ENCODE measurements at regions of chr11 and their contacts with region 1.

Region 1: DNA sequence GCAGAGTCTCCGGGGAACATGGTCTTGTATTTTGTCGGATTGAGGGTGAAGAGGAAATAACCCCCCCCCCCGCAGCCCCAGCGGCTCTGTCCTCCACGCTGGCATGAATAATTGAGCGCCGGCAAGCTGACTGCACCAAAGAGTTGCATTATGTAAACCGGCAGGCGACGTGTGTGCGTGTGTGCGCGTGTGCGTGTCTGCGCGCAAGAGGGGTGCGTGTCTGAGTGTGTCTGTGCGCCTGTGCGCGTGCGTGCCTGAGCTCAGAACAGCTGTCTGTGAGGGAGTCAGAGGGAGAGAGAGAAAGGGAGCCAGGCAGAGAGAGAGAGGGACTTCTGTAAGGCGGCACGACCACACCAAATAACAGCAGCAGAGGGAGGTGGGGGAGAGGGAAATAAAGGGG is 94.4 kb downstream of the SCN3B start:
- DNase-seq: peak; percentile 24
- H3K4me3 Mint-ChIP-seq: peak overlapping the region; percentile 65
- H3K27ac Mint-ChIP-seq: peak overlapping the region; percentile 57
- H3K4me1 Mint-ChIP-seq: peaks cover 28% of the 10 kb centered on the region
- H3K27me3 Mint-ChIP-seq: no peaks in the 10 kb centered on the region

Region 2: GRCh38 chr11:123511037-123511870 is 48.8 kb before region 1 on chr11:
- intact Hi-C with region 1: loop called (anchors 1 kb)
- DNase-seq: peak; percentile 56
- H3K4me3 Mint-ChIP-seq: no peak overlapping the region
- H3K27ac Mint-ChIP-seq: peak overlapping the region; percentile 73
- H3K4me1 Mint-ChIP-seq: peaks cover 57% of the 10 kb centered on the region
- H3K27me3 Mint-ChIP-seq: no peaks in the 10 kb centered on the region

Region 3: DNA sequence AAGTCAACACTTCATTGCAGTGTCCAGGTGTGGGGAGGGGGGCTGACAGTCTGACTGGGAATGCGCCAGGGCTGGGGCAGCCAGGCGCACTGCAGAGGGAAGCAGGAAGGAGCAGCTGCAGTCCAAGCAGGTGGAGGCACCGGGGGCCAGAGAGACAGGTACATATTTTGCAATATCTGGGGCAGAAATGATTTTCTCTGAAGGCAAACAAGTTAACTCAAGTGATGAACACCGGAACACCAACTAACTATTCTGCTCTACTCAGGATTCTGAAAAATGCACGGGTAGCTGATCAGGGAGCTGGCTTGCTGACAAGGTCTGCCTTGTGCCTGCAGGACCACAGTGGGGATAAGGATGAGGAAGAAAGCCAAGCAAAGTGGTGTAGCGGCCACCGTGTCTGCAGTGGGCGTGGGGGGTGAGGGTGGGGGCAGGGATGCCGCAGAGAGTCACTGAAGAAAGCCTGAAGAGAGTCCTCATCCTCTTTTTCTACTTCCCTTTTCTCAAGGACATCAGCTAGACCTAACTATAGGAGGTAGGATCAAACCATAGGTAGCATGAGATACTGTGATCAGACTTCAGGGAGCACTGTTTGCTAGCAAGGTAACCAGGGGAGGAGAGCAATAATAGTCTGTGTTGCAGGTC is 11.1 kb after region 1 on chr11:
- intact Hi-C with region 1: no loop called
- DNase-seq: no peak
- H3K4me3 Mint-ChIP-seq: no peak overlapping the region
- H3K27ac Mint-ChIP-seq: peak overlapping the region; percentile 43
- H3K4me1 Mint-ChIP-seq: peaks cover 29% of the 10 kb centered on the region
- H3K27me3 Mint-ChIP-seq: no peaks in the 10 kb centered on the region

Measured in activated T-helper 1 cell treated with anti-CD3 and anti-CD28 coated beads, Interleukin-12 subunit alpha, Interleukin-12 subunit beta, Interleukin-2, Interleukin-4 antibody, amounts not matched to agents 30 ng/mL and 10 ng/mL and 1 ng/mL, durations not matched to agents 14 hours and 24 hours and 36 hours (primary cell).